Caco-2 (cell line): ENCODE measurements at regions of chr2 and their contacts with region 1.

Region 1: GRCh38 chr2:155203207-155203606 is 504.7 kb downstream of the KCNJ3 start:
- DNase-seq: peak in 1 of 2 experiments; percentile 9
- H3K4me3 ChIP-seq: no peak overlapping the region
- H3K4me3 Mint-ChIP-seq: no peak overlapping the region
- H3K27ac Mint-ChIP-seq: no peak overlapping the region
- H3K4me1 ChIP-seq: no peaks in the 10 kb centered on the region
- H3K4me1 Mint-ChIP-seq: no peaks in the 10 kb centered on the region
- H3K27me3 ChIP-seq: no peaks in the 10 kb centered on the region
- H3K27me3 Mint-ChIP-seq: no peaks in the 10 kb centered on the region
- CTCF ChIP-seq: no peak

Region 2: DNA sequence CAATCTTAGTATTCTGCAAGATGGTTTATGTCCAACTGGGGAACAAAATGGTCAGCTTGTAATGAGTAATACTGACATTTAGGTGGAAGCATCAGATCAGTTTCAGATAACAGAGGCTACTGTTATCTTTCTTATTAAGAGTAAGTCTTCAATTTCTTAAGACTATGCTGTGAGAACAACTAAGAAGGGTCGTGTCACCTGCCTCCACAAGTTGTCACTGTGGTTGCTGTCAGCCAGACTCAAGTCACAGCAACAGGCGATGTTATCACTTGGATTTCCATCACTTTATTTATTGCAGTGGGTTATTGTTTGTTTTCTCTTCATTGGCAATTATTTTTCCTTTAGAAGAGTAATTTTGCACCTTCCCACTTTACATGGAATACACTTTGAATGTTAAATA is 159.5 kb before region 1 on chr2:
- CTCF ChIA-PET with region 1: no interaction called
- POLR2A ChIA-PET with region 1: no interaction called
- intact Hi-C with region 1: loop called (anchors 10 kb)
- DNase-seq: no peak
- H3K4me3 ChIP-seq: no peak overlapping the region
- H3K4me3 Mint-ChIP-seq: no peak overlapping the region
- H3K27ac Mint-ChIP-seq: no peak overlapping the region
- H3K4me1 ChIP-seq: no peaks in the 10 kb centered on the region
- H3K4me1 Mint-ChIP-seq: no peaks in the 10 kb centered on the region
- H3K27me3 ChIP-seq: no peaks in the 10 kb centered on the region
- H3K27me3 Mint-ChIP-seq: peaks cover 2% of the 10 kb centered on the region
- CTCF ChIP-seq: no peak

Region 3: DNA sequence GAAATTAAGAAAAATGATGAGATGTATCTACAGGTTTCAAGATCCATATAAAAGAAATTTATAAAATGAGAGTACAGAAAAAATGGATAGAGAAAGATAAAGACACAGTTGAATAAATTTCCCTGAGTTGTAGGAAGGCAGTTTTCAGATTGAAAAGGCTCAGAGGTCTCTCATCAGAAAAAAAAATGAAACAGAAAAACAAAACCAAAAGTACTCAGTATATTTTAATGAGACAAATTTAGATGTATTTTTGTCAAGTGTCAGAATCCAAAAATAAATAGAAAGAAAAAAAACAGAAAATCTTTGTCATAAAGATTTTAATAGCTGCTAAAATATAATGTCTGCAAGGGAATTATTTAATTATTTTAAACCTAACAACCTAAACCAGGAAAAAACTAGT is 15.7 kb after region 1 on chr2:
- CTCF ChIA-PET with region 1: no interaction called
- POLR2A ChIA-PET with region 1: no interaction called
- intact Hi-C with region 1: no loop called
- DNase-seq: no peak
- H3K4me3 ChIP-seq: no peak overlapping the region
- H3K4me3 Mint-ChIP-seq: no peak overlapping the region
- H3K27ac Mint-ChIP-seq: no peak overlapping the region
- H3K4me1 ChIP-seq: no peaks in the 10 kb centered on the region
- H3K4me1 Mint-ChIP-seq: no peaks in the 10 kb centered on the region
- H3K27me3 ChIP-seq: no peaks in the 10 kb centered on the region
- H3K27me3 Mint-ChIP-seq: peaks cover 3% of the 10 kb centered on the region
- CTCF ChIP-seq: no peak